Heart left ventricle (tissue), 16 donors: ENCODE measurements at regions of chr6 and their contacts with region 1.

Region 1: DNA sequence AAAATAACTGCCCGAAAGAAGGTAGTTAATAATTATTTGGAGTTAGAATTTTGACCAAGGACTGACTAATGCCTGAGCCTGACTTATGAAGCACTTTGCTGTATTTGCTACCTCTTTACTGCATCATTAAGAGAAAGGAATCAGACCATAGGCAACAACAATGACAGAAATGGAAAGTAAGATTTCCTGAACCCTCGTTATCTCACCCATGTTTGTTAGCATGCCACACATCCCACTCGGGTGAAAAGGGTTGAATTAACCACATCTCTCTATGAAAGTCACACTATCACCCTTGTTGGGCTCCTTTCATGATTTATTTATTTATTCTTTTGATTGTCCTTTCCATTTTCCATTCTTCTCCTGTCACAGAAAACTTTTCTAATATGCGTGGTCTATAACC is 59.6 kb downstream of the OLIG3 start:
- DNase-seq: no peak
- ATAC-seq: no peak
- H3K4me3 ChIP-seq: no peak overlapping the region
- H3K27ac ChIP-seq: no peak overlapping the region
- H3K4me1 ChIP-seq: no peaks in the 10 kb centered on the region
- H3K27me3 ChIP-seq: no peaks in the 10 kb centered on the region
- CTCF ChIP-seq: no peak
- POLR2A ChIP-seq: no peak

Region 2: GRCh38 chr6:137369136-137369535 is 65.5 kb before region 1 on chr6:
- intact Hi-C with region 1: loop called in 1 of 10 experiments (anchors 2 kb)
- DNase-seq: no peak
- ATAC-seq: no peak
- H3K4me3 ChIP-seq: no peak overlapping the region
- H3K27ac ChIP-seq: no peak overlapping the region
- H3K4me1 ChIP-seq: no peaks in the 10 kb centered on the region
- H3K27me3 ChIP-seq: no peaks in the 10 kb centered on the region
- CTCF ChIP-seq: no peak
- POLR2A ChIP-seq: no peak

Region 3: DNA sequence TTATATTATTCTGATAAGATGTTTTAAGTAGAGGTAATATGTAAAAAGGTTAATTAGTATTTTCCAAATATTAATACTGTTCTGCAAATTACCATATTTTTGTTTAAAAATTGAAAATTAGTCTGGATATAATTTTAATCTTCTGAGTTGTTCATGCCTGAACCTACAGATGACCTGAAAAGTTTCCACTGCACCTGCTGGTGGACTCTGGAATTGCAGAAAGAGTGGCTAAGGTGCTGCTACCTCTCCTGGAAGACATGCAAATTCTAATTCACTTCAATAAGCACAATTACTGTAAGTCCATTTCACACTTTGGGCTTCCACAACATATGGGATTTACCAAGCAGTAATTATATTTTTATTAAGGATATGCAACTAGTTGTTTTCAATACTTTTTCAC is 137.2 kb after region 1 on chr6:
- intact Hi-C with region 1: no loop called
- DNase-seq: no peak
- ATAC-seq: no peak
- H3K4me3 ChIP-seq: no peak overlapping the region
- H3K27ac ChIP-seq: no peak overlapping the region
- H3K4me1 ChIP-seq: no peaks in the 10 kb centered on the region
- H3K27me3 ChIP-seq: peaks cover 0 to 23% (median 0%) of the 10 kb centered on the region in 9 donors
- CTCF ChIP-seq: peak in 10 of 12 donors; percentile 17 to 58 (median 34)
- POLR2A ChIP-seq: no peak